ENCODE measurements at regions of chr19 and their contacts with region 1.

Region 1: DNA sequence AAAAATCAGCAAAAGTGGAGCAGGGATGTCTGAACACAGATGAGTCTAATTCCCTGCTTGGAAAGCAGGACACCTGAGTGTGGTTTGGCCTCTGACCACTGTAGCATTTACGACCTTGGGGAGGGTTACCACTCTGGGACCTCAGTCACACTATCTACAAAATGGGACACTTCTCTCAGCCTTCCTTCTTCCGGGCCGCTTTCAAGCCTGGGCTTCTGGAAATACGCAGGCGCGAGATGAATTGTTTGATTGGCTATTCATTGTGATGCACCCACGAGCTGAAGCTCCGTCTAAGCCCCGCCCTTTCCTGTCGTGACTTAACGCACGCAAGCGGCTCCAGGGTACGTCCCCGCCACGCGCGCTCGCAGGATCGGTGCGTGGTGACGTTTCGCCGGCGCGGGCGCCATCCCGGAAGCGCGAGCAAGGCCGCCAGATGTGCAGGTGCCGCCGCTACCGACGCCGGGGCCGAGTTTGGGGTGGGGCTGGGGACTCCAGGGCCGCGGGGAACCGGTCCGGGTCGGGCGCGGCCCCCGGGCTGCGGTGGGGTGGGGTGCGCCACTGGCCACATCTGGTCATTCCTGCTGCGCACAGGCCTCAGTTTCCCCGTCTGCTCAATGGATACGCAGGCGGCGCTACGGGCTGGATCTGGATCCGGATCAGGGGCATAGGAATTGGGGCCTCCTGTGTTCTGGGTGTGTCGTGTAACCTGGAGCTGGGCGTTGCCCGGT is at the start of gene KXD1:
- DNase-seq: peak; percentile 96 to 99
- ATAC-seq: peak; percentile 96 to 99 (median 98)
- H3K4me3 ChIP-seq: peak within 1 kb of the TSS; percentile 71 to 96 (median 87)
- H3K27ac ChIP-seq: peak within 1 kb of the TSS; percentile 66 to 98 (median 95)
- H3K4me1 ChIP-seq: peaks cover 4 to 45% (median 28%) of the 10 kb centered on the region in 9 donors
- H3K27me3 ChIP-seq: no peaks in the 10 kb centered on the region
- CTCF ChIP-seq: no peak
- total RNA-seq, gene KXD1: 35.6 to 63.9 (median 45.6) TPM

Region 2: DNA sequence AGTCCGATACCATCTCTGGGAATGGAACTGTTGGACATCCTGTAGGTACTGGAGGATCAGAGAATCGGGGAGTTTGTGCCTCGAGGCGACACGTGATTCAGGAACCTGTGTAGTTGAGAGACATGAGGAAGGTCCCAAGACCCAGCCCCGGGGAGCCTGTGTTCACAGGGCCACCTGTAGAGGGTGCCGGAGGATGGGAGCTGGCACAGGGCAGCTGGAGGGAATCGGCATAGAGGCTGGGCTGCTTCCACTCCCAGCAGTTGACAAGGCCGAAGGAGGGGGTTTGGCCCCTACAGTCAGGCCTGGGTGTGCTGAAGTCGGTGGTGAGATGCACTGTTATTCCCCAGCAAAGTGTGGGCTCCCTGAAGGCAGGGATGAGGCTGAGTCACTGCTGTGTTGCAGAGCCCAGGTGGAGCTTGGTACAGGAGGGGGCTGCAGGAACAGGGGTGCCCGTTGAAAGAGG is 117.2 kb before region 1 on chr19:
- intact Hi-C with region 1: loop called in 1 of 10 experiments (anchors 10 kb)
- DNase-seq: no peak
- ATAC-seq: no peak
- H3K4me3 ChIP-seq: no peak overlapping the region
- H3K27ac ChIP-seq: peak overlapping the region in 1 of 10 donors; percentile 24
- H3K4me1 ChIP-seq: peaks cover 11 to 37% (median 26%) of the 10 kb centered on the region in 9 donors
- H3K27me3 ChIP-seq: peaks cover 0 to 23% (median 0%) of the 10 kb centered on the region in 7 donors
- CTCF ChIP-seq: peak in 6 of 9 donors; percentile 20 to 48 (median 36)

Region 3: DNA sequence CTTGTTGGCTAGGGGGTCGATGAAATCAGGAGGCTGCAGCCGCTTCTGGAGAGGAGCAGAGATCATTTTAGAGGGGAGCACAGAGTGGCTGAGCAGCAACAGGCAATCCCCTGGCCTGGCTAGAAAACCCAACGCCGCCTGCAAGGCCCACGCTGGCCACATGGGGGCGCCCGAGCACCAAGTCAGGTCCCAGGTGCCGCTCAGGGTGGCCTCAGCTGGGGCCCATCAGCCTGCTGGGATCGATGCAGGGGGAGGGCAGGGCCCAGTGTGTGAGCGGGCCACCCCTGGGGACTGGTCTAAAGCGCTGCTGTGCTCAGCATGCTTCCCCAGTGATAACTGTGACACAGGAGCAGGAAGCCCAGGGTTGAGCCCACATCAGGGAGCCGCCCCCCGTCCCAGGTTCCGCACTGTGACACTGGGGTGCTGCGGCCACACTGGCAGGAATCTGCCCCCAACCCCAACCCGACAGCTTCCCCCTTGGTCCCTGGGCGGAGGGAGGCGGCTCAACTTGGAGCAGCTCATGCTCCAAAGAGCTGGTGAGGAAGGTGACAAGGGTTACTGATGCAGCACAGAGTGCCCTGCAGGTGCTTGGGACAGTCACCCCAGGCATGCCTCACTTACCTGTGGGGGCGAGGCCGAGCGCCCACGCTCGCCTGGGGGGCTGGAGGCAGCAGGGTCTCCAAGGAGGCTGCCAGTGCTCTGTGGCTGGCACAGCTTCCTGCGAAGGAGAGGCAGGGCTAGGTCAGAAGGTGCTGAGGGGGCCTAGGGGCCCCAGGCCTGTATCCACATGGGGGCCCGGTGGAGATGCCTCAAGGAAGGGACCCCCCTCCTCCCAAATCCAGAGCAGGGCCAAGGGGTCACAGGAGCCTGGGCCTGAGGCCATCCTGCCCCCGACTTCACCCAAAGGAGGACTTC is 106.5 kb before region 1 on chr19:
- intact Hi-C with region 1: loop called in 2 of 10 experiments (anchors 5 to 10 kb)
- DNase-seq: peak; percentile 86 to 91
- ATAC-seq: peak; percentile 78 to 91 (median 86)
- H3K4me3 ChIP-seq: no peak overlapping the region
- H3K27ac ChIP-seq: no peak overlapping the region
- H3K4me1 ChIP-seq: peaks cover 0 to 17% (median 9%) of the 10 kb centered on the region in 9 donors
- H3K27me3 ChIP-seq: no peaks in the 10 kb centered on the region
- CTCF ChIP-seq: peak; percentile 97 to 99 (median 98)

Region 4: GRCh38 chr19:18478569-18479311 is 78.9 kb before region 1 on chr19:
- intact Hi-C with region 1: loop called in 1 of 10 experiments (anchors 5 kb)
- DNase-seq: peak; percentile 71 to 80
- ATAC-seq: peak; percentile 71 to 87 (median 78)
- H3K4me3 ChIP-seq: no peak overlapping the region
- H3K27ac ChIP-seq: peak overlapping the region; percentile 19 to 96 (median 81)
- H3K4me1 ChIP-seq: peaks cover 20 to 99% (median 64%) of the 10 kb centered on the region in 9 donors
- H3K27me3 ChIP-seq: no peaks in the 10 kb centered on the region
- CTCF ChIP-seq: no peak

Region 5: DNA sequence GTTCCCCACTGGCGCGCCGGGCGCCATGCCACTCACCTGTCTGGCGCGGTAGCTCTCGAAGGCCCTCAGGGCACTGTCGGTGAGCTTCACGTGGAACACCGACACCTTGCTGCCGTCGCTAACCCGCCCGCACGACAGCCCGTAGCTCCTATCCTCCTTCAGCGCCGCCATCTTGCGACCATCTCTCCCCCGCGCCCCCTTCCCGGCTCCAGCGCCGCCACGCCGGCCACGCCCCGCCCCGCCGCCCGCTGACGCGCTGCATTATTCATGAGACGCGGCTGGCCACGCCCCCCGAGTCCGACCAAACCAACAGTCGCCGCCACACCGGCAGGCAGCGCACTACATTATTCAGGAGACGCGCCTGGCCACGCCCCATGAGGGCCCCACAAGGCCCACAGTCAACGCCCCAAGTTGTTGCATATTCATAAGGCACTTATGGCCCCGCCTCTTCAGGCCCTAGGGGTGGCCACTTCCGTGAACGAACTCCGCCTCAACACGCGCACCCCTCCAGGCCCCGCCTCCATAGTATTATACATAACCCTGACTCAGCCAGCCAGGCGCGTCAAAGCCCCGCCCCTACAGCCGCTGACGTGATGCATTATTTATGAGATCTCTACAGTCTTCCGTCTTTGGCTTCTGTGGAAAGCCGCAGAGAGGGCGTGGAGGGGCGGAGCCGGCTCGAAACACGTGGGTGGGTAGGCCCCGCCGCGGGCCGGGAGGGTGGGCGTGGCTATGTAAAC is 35.6 kb before region 1 on chr19 and contains the start of gene ELL:
- intact Hi-C with region 1: loop called in 4 of 10 experiments (anchors 1 to 5 kb)
- DNase-seq: peak; percentile 100
- ATAC-seq: peak; percentile 92 to 96 (median 95)
- H3K4me3 ChIP-seq: peak within 1 kb of the TSS; percentile 67 to 100 (median 98)
- H3K27ac ChIP-seq: peak within 1 kb of the TSS; percentile 79 to 100 (median 95)
- H3K4me1 ChIP-seq: peaks cover 0 to 43% (median 25%) of the 10 kb centered on the region in 9 donors
- H3K27me3 ChIP-seq: no peaks in the 10 kb centered on the region
- CTCF ChIP-seq: peak in 6 of 9 donors; percentile 10 to 54 (median 34)
- total RNA-seq, gene ELL: 5.7 to 13.1 (median 7.5) TPM

Region 6: DNA sequence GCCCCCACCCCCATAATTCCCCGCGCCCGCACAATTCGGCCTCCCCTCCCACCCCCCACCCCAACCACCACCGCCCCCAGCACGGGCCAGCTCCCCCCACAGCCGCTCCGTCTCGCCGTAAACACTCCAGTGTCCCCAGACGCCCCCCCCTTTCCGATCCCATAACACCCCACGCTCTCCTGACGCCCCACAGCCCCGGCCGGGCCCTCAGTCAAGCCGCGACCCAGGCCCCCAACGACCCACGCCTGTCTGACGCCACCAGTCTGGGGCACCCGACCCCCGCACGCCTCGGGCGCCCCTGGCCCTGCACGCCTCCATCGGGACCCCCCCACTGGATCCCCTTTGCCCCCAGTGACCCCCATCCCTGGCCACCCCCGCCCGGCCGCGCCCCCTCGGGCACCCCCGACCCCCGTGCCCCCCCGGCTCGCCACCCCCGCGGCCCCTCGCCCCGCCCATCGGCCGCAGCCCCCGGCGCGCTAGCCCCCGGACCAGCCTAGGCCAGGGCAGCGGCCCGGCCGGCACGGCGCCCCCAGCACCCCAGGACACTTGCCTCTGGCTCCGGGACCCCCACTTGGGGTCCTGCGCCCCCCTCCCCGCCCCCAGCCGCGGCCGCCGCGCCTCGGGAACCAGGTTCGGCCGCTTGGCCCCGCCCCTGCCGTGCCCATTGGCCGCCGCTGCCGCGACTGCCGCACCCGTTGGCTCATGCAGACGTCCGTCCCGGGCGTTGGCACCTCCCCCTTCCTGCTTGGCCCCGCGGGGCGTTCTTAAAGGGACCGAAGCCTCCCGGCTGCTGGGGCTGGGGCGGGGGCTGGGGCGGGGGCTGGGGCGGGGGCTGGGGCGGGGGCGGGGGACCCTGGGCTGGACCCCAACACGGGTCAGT is 14.5 kb before region 1 on chr19 and contains the start of gene FKBP8:
- intact Hi-C with region 1: loop called in 1 of 10 experiments (anchors 1 kb)
- DNase-seq: peak; percentile 94 to 96
- ATAC-seq: peak; percentile 96 to 99 (median 98)
- H3K4me3 ChIP-seq: peak within 1 kb of the TSS; percentile 26 to 85 (median 60)
- H3K27ac ChIP-seq: peak within 1 kb of the TSS; percentile 78 to 94 (median 90)
- H3K4me1 ChIP-seq: peaks cover 8 to 20% (median 16%) of the 10 kb centered on the region in 9 donors
- H3K27me3 ChIP-seq: no peaks in the 10 kb centered on the region
- CTCF ChIP-seq: no peak
- total RNA-seq, gene FKBP8: 132 to 196 (median 151) TPM

Measured in heart right ventricle (tissue), 16 donors.